ENCODE measurements at regions of chr1 and their contacts with region 1.

Region 1: GRCh38 chr1:85328713-85329376 is 52.4 kb upstream of the BCL10 start:
- DNase-seq: peak; percentile 73 to 99
- H3K4me3 ChIP-seq: no peak overlapping the region
- H3K27ac ChIP-seq: peak overlapping the region; percentile 68
- H3K4me1 ChIP-seq: peaks cover 52% of the 10 kb centered on the region
- H3K27me3 ChIP-seq: no peaks in the 10 kb centered on the region
- CTCF ChIP-seq: no peak

Region 2: DNA sequence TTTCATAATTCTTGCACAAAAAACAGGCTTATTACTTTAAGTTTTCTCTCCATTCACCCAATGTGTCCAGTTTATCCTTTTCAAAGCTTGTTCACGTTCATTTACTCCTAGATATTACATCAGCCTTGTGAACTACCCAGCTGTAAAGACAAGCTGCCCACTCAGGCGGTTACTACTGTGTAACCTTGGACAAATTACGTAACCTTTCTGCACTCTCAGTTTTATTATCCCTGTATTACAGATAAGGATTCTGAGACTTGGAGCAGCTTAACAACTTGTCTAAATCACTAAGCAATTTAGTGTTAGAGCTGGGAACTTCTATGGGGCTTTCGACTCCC is 415.3 kb before region 1 on chr1:
- CTCF ChIA-PET with region 1: no interaction called
- POLR2A ChIA-PET with region 1: no interaction called
- intact Hi-C with region 1: no loop called
- DNase-seq: no peak
- H3K4me3 ChIP-seq: no peak overlapping the region
- H3K27ac ChIP-seq: no peak overlapping the region
- H3K4me1 ChIP-seq: peaks cover 8% of the 10 kb centered on the region
- H3K27me3 ChIP-seq: no peaks in the 10 kb centered on the region
- CTCF ChIP-seq: no peak

Region 3: DNA sequence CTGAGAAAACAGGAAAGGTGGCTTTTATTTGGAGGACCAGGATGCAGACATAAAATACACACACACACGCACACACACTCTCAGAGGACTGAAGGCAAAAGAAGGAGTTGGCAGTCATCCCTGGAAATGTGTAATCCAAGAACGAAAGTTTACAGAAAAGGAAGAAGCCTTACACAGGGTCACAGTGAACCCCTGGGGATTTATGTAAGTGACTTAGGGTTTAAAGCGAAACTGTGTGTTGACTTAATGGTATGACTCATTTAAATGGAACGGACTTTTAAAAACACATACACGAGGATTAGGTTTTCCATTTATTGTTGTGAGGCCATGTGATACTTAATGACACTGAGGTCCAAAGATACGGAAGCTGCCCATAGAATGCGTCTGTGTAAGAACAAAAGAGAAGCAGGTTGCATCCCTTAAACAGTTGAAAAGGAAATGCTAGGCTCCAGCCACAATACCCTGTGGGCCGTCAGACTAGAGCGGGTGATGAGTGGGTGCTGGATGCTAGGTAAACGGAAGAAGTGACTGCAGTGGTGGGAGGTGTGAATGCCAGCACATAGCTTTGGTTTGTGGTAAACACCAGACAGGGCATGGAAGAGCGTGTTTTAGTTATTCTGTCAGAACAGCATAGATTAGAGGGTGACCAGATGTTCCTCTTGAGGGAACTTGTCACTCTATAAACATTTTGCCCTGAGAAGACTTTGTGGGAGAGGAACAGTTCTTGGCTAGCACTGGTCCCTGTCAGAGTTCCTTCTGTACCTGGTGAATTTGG is 30.8 kb before region 1 on chr1:
- CTCF ChIA-PET with region 1: no interaction called
- POLR2A ChIA-PET with region 1: no interaction called
- intact Hi-C with region 1: loop called (anchors 1 kb)
- DNase-seq: peak; percentile 75 to 100
- H3K4me3 ChIP-seq: peak overlapping the region; percentile 35; the same call in 1 of the 2 replicates
- H3K27ac ChIP-seq: peak overlapping the region; percentile 93
- H3K4me1 ChIP-seq: peaks cover 62% of the 10 kb centered on the region
- H3K27me3 ChIP-seq: no peaks in the 10 kb centered on the region
- CTCF ChIP-seq: no peak

Region 4: GRCh38 chr1:85313888-85314696 is 14.8 kb before region 1 on chr1:
- CTCF ChIA-PET with region 1: interaction called, 3 read pairs
- POLR2A ChIA-PET with region 1: no interaction called
- intact Hi-C with region 1: loop called (anchors 2 kb)
- DNase-seq: peak; percentile 52 to 88
- H3K4me3 ChIP-seq: no peak overlapping the region
- H3K27ac ChIP-seq: peak overlapping the region; percentile 35
- H3K4me1 ChIP-seq: peaks cover 24% of the 10 kb centered on the region
- H3K27me3 ChIP-seq: no peaks in the 10 kb centered on the region
- CTCF ChIP-seq: no peak

Region 5: GRCh38 chr1:85494904-85495266 is 166.0 kb after region 1 on chr1:
- CTCF ChIA-PET with region 1: no interaction called
- POLR2A ChIA-PET with region 1: no interaction called
- intact Hi-C with region 1: loop called (anchors 1 kb)
- DNase-seq: peak in 1 of 2 experiments; percentile 46
- H3K4me3 ChIP-seq: no peak overlapping the region; the same call in 1 of the 2 replicates
- H3K27ac ChIP-seq: peak overlapping the region; percentile 51
- H3K4me1 ChIP-seq: peaks cover 35% of the 10 kb centered on the region
- H3K27me3 ChIP-seq: no peaks in the 10 kb centered on the region
- CTCF ChIP-seq: no peak

Region 6: DNA sequence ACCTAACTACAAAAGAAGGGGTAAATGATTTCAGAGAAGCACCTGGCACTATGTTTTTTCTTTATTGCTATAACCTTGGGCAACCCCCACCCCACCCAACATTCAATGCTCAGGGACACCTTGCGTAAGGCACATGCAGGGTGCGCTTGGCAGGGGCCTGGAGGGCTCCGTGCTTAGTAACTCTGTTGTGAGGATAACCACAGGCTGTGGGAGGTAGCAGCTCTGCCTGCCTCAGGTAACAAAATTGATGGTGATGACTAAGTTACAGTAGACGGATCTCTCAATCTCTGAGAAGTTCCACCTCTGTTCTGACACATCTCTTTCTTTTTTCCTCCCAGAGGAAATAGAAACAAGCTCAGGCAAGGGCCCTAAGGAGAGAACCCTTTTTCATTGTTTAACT is 243.0 kb after region 1 on chr1:
- CTCF ChIA-PET with region 1: no interaction called
- POLR2A ChIA-PET with region 1: interaction called, 3 read pairs
- intact Hi-C with region 1: loop called (anchors 2 kb)
- DNase-seq: peak; percentile 66 to 96
- H3K4me3 ChIP-seq: 0 out of 2 replicates have a peak overlapping the region, but pooled peaks have one; percentile 7
- H3K27ac ChIP-seq: peak overlapping the region; percentile 71
- H3K4me1 ChIP-seq: peaks cover 65% of the 10 kb centered on the region
- H3K27me3 ChIP-seq: no peaks in the 10 kb centered on the region
- CTCF ChIP-seq: no peak

Region 7: DNA sequence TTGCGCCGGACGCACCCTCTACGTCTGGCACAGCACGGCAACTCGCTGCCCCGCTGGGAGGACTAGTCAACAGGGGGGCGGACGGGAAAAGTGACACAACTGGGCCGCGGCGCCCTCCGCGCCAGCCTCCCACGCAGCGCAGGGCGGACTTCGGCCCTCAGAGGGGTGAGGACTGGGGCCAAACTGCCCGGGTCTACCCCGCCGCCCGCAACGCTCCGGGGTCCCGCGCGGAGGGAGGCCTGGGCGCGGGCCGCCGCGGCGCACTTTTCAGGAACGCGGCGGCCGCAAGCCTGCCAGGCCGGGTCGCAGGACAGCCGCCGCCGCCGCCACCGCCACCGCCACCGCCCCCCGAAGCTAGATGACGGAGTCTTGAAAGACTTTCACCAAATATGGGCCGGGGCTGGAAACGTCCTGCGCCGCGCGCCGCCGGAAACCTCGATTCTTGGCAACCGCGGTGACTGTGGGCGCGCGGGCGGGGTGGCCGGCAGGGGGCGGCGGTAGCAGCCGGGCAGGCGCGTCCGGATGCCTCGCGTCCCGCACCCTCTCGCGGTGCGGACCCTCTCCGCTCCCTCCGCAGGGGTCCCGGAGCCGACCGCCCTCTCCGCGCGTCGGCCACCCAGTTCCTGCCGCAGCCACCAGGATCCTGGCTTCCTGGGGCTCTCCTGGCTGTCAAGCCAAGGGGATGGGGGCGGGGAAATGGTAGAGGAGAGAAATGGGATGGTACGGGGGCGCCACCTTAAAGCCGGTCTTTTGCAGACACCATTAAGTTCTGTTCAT is 248.0 kb after region 1 on chr1:
- CTCF ChIA-PET with region 1: no interaction called
- POLR2A ChIA-PET with region 1: interaction called, 4 read pairs
- intact Hi-C with region 1: loop called (anchors 1 kb)
- DNase-seq: peak; percentile 74 to 83
- H3K4me3 ChIP-seq: peak overlapping the region; percentile 74
- H3K27ac ChIP-seq: peak overlapping the region; percentile 47
- H3K4me1 ChIP-seq: peaks cover 50% of the 10 kb centered on the region
- H3K27me3 ChIP-seq: no peaks in the 10 kb centered on the region
- CTCF ChIP-seq: peak; percentile 79

Region 8: GRCh38 chr1:85612704-85613361 is 284.0 kb after region 1 on chr1:
- CTCF ChIA-PET with region 1: no interaction called
- POLR2A ChIA-PET with region 1: interaction called, 3 read pairs
- intact Hi-C with region 1: loop called (anchors 1 kb)
- DNase-seq: peak; percentile 60 to 98
- H3K4me3 ChIP-seq: peak overlapping the region; percentile 12; the same call in 1 of the 2 replicates
- H3K27ac ChIP-seq: peak overlapping the region; percentile 91
- H3K4me1 ChIP-seq: peaks cover 48% of the 10 kb centered on the region
- H3K27me3 ChIP-seq: no peaks in the 10 kb centered on the region
- CTCF ChIP-seq: peak; percentile 65